ENCODE measurements at regions of chr12 and their contacts with region 1.

Region 1: DNA sequence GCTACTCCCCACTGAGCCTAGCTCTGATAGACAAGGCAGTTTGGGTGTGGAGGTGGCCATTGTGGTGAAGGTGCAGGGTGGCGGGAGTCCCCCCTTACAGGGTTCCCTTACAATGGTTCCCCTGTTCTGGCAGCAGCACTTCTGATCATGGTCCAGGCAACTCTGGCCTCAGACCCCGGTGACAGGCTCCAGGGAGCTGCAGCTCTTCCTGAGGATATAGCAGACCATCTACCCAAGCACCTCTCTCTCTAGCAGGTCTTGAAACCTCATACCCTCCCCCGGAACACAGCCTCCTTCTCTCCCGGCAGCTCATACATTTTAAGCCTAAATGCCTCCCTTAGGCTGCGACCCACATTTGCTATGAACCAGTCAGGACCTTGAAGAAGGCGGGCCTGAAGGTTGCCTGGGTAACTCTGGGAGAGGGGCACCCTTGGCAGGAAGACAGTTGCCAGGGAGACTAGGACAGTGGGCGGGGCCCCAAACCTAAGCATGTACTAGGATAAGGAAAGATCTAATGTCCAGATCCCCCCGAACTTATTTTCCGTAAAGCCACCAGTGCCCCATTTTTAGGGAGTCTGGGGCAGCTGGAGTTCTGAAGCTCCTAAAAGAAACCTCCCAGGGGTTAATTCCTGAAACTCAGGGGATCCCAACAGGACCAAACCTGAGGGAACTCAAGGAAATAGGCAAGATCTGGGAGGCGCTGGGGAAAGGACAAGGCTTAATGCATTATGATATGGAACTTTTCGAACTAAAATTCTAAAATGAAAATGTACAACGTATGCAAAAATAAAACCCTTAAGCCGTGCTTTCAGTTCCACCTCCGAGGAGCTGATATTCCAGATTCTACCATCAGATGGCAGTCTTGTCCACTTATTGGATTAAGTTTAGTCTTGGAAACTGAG is 4.5 kb upstream of the GDF11 start:
- DNase-seq: peak; percentile 70
- H3K4me3 ChIP-seq: peak overlapping the region; percentile 55 to 64 (median 56)
- H3K27ac ChIP-seq: peak overlapping the region; percentile 31
- H3K4me1 ChIP-seq: peaks cover 8% of the 10 kb centered on the region
- H3K27me3 ChIP-seq: no peaks in the 10 kb centered on the region
- CTCF ChIP-seq: peak; percentile 73 to 82

Region 2: GRCh38 chr12:55681142-55682077 is 57.0 kb before region 1 on chr12:
- CTCF ChIA-PET with region 1: no interaction called
- dilution Hi-C with region 1: no loop called
- in situ Hi-C with region 1: no loop called
- intact Hi-C with region 1: loop called (anchors 1 kb)
- DNase-seq: peak; percentile 43
- H3K4me3 ChIP-seq: peak overlapping the region in 1 of 3 experiments; percentile 25
- H3K27ac ChIP-seq: no peak overlapping the region
- H3K4me1 ChIP-seq: peaks cover 10% of the 10 kb centered on the region
- H3K27me3 ChIP-seq: no peaks in the 10 kb centered on the region
- CTCF ChIP-seq: peak; percentile 24 to 44

Region 3: GRCh38 chr12:55940065-55940732 is 201.8 kb after region 1 on chr12:
- CTCF ChIA-PET with region 1: no interaction called
- dilution Hi-C with region 1: no loop called
- in situ Hi-C with region 1: loop called in 1 of 2 experiments (anchors 5 kb)
- intact Hi-C with region 1: no loop called
- DNase-seq: peak; percentile 82
- H3K4me3 ChIP-seq: no peak overlapping the region
- H3K27ac ChIP-seq: peak overlapping the region; percentile 97
- H3K4me1 ChIP-seq: peaks cover 48% of the 10 kb centered on the region
- H3K27me3 ChIP-seq: no peaks in the 10 kb centered on the region
- CTCF ChIP-seq: peak; percentile 88 to 94

Region 4: DNA sequence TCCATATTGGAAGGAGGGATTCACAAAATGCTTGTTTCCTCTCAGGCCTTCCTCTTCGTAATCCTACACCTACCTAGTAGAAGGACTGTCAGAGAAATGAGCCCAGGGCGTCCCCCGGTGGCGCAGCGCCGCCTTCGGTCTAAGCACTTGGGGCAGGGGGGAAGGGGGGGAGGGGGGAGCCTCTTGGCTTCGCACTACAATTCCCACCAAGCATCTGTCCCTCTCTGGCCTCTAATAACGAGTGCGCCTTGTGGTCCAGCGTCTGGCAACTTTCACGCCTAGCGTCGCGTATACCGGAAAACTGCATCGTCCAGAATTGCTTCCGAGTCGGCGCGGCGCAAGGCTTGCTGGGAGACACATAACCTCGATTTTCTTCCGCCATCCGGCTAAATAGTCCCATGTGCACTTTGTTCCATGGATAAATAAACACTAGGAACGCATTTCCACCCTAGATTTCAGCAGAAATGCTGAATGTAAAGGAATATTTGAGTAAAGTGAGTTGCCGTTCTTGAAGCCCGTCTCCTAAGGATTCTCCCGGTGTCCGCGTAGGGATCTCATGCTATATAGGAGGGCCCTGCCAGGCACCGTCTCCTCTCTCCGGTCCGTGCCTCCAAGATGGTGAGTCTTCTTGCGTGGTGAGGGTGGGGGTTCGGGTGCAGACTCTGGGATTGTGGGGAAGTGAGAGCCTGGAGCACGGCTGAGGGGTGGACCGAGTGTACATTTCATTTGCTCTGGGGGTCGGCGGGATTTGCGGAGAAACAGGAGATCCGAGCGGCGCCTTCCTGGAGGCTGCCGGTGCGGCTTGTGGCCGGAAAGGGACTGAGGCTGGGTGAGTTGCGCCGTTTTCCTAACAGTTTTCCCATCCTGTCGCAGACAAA is 303.4 kb after region 1 on chr12 and contains the start of gene RPS26:
- CTCF ChIA-PET with region 1: interaction called, 5 read pairs
- dilution Hi-C with region 1: no loop called
- in situ Hi-C with region 1: no loop called
- intact Hi-C with region 1: loop called (anchors 1 kb)
- DNase-seq: peak; percentile 99
- H3K4me3 ChIP-seq: peak within 1 kb of the TSS; percentile 78 to 91 (median 86)
- H3K27ac ChIP-seq: peak within 1 kb of the TSS; percentile 91
- H3K4me1 ChIP-seq: peaks cover 19% of the 10 kb centered on the region
- H3K27me3 ChIP-seq: no peaks in the 10 kb centered on the region
- CTCF ChIP-seq: peak; percentile 16 to 54
- total RNA-seq, gene RPS26: 46.4 to 331 TPM

Region 5: GRCh38 chr12:56189176-56189917 is 451.0 kb after region 1 on chr12 and contains the start of gene SMARCC2:
- CTCF ChIA-PET with region 1: interaction called, 5 read pairs
- dilution Hi-C with region 1: no loop called
- in situ Hi-C with region 1: no loop called
- intact Hi-C with region 1: loop called (anchors 1 kb)
- DNase-seq: peak; percentile 75
- H3K4me3 ChIP-seq: peak within 1 kb of the TSS; percentile 69 to 88 (median 71)
- H3K27ac ChIP-seq: peak within 1 kb of the TSS; percentile 56
- H3K4me1 ChIP-seq: peaks cover 18% of the 10 kb centered on the region
- H3K27me3 ChIP-seq: no peaks in the 10 kb centered on the region
- CTCF ChIP-seq: peak; percentile 52 to 71
- total RNA-seq, gene SMARCC2: 28.7 to 61.6 TPM

Region 6: GRCh38 chr12:56816491-56816890 is 1078.1 kb after region 1 on chr12:
- CTCF ChIA-PET with region 1: no interaction called
- dilution Hi-C with region 1: no loop called
- in situ Hi-C with region 1: no loop called
- intact Hi-C with region 1: no loop called
- DNase-seq: no peak
- H3K4me3 ChIP-seq: no peak overlapping the region
- H3K27ac ChIP-seq: no peak overlapping the region
- H3K4me1 ChIP-seq: no peaks in the 10 kb centered on the region
- H3K27me3 ChIP-seq: no peaks in the 10 kb centered on the region
- CTCF ChIP-seq: no peak